A549 (cell line): ENCODE measurements at regions of chr17 and their contacts with region 1.

Region 1: DNA sequence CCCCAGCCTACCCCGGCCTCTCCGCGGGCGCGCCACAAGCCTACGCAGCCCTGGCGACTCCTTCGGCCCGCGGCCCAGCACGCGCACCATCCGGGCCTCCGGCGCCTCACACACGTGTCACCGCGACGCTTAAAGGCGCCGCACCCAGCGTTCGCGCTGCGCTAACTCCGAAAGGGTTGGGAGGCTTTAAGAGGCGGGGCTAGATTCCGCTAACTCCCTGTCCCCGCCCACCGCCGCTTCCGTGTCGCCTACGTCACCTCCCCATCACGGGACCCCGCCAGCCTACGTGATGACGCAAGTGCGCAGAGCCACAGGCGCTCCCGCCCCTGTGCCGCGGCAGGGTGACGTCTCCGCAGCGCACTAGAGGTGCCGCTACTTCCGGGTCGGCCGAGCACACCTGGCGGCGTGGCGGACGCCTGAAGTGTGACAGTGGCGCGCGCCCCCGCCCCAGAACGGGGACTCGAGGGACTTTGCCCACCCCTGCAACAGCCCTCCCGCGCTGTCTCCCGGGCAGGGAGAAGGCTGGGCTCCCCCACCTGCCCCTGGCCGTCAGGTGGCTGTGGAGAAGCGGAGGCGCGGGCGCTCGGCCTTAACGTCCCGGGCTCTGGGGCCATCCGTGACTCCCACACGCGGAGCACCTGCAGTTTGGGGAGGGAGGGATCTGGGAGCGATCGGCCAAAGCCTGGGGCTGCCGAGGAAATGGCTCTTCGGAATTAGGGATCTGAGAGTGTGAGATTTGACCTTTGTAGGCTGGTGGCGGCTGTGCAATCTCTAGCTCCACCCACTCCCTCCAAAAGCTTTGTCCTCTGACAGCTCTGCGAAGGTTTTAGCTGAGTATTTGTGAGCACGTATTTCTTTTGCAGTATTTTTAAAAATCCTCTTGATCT is at the start of gene USP36:
- DNase-seq: peak; percentile 98 to 100
- ATAC-seq: peak; percentile 88 to 93
- H3K4me3 ChIP-seq: peak within 1 kb of the TSS; percentile 99
- H3K27ac ChIP-seq: peak within 1 kb of the TSS; percentile 94
- H3K4me1 ChIP-seq: peaks cover 24% of the 10 kb centered on the region
- CTCF ChIP-seq: no peak
- EP300 ChIP-seq: peak in 1 of 2 experiments; percentile 44; a peak in 1 of 5 replicates
- POLR2A ChIP-seq: peak; percentile 84
- RAD21 ChIP-seq: no peak; a peak in 1 of 5 replicates
- polyA plus RNA-seq, gene USP36: 49.0 and 59.0 TPM in 2 replicates

Region 2: GRCh38 chr17:78852709-78853121 is 11.7 kb after region 1 on chr17:
- CTCF ChIA-PET with region 1: interaction called, 17 read pairs
- POLR2A ChIA-PET with region 1: interaction called, 4 read pairs
- DNase-seq: peak in 1 of 2 experiments; percentile 41
- ATAC-seq: 0 out of 6 replicates have a peak, but pooled peaks of 1 of the 2 experiments have one; percentile 12
- H3K4me3 ChIP-seq: no peak overlapping the region
- H3K27ac ChIP-seq: no peak overlapping the region
- H3K4me1 ChIP-seq: no peaks in the 10 kb centered on the region
- CTCF ChIP-seq: no peak
- EP300 ChIP-seq: no peak
- POLR2A ChIP-seq: no peak
- RAD21 ChIP-seq: no peak; a peak in 1 of 5 replicates

Region 3: DNA sequence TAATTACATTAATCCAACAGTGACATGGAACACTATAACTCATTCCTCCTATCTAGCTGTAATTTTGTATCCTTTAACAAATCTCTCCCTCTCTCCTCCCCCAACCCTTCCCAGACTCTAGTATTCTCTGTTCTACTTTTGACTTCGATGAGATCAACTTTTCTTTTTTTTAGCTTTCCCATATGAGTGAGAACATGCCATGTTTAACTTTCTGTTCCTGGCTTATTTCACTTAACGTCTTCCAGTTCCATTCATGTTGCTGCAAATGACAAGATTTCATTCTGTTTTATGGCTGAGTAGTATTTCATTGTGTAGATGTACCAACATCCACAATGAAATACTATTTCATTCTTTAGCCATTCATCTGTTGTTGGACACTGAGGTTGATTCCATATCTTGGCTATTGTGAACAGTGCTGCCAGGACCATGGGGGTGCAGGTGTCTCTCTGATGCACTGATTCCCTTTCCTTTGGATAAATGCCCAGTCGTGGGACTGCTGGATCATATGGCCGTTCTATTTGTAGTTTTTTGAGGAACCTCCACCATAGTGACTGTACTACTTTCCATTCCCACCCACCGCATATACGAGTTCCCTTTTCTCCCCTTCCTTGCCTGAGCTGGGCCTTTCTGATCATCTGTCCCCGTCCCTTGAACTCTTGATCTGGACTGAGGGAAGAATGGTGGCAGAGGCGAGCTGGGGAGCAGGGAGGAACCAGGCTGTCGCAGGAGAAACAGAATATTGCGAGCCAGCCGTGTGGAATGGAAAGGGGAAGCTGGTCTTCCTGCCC is 69.7 kb after region 1 on chr17:
- CTCF ChIA-PET with region 1: no interaction called
- POLR2A ChIA-PET with region 1: no interaction called
- DNase-seq: no peak
- ATAC-seq: no peak
- H3K4me3 ChIP-seq: no peak overlapping the region
- H3K27ac ChIP-seq: no peak overlapping the region
- H3K4me1 ChIP-seq: peaks cover 19% of the 10 kb centered on the region
- CTCF ChIP-seq: no peak
- EP300 ChIP-seq: no peak
- POLR2A ChIP-seq: no peak
- RAD21 ChIP-seq: no peak

Region 4: GRCh38 chr17:79340333-79341221 is 499.6 kb after region 1 on chr17:
- CTCF ChIA-PET with region 1: no interaction called
- POLR2A ChIA-PET with region 1: no interaction called
- DNase-seq: no peak
- ATAC-seq: no peak
- H3K4me3 ChIP-seq: no peak overlapping the region
- H3K27ac ChIP-seq: no peak overlapping the region
- H3K4me1 ChIP-seq: peaks cover 3% of the 10 kb centered on the region; the same call in 1 of the 3 replicates
- CTCF ChIP-seq: no peak
- EP300 ChIP-seq: no peak
- POLR2A ChIP-seq: no peak
- RAD21 ChIP-seq: no peak